Gastrocnemius medialis (tissue), 4 donors: ENCODE measurements at regions of chr9 and their contacts with region 1.

Region 1: GRCh38 chr9:19048966-19049916 is at the start of gene RRAGA:
- DNase-seq: peak; percentile 84 to 89
- ATAC-seq: peak; percentile 94 to 96
- H3K4me3 ChIP-seq: peak within 1 kb of the TSS; percentile 63 to 100 (median 76)
- H3K27ac ChIP-seq: peak within 1 kb of the TSS; percentile 90 to 98 (median 96)
- H3K4me1 ChIP-seq: peaks cover 30 to 42% of the 10 kb centered on the region in 2 donors
- H3K27me3 ChIP-seq: no peaks in the 10 kb centered on the region
- CTCF ChIP-seq: peak; percentile 83 to 96 (median 94)
- POLR2A ChIP-seq: peak; percentile 86 to 87
- total RNA-seq, gene RRAGA: 65.2 to 70.4 (median 65.5) TPM

Region 2: GRCh38 chr9:17810728-17811571 is 1238.3 kb before region 1 on chr9:
- in situ Hi-C with region 1: loop called in 1 of 4 experiments (anchors 25 kb)
- intact Hi-C with region 1: no loop called
- DNase-seq: no peak
- ATAC-seq: no peak
- H3K4me3 ChIP-seq: no peak overlapping the region
- H3K27ac ChIP-seq: no peak overlapping the region
- H3K4me1 ChIP-seq: no peaks in the 10 kb centered on the region
- H3K27me3 ChIP-seq: no peaks in the 10 kb centered on the region
- CTCF ChIP-seq: peak; percentile 22 to 63 (median 41)
- POLR2A ChIP-seq: no peak

Region 3: GRCh38 chr9:18245911-18246310 is 803.3 kb before region 1 on chr9:
- in situ Hi-C with region 1: no loop called
- intact Hi-C with region 1: no loop called
- DNase-seq: no peak
- ATAC-seq: no peak
- H3K4me3 ChIP-seq: no peak overlapping the region
- H3K27ac ChIP-seq: no peak overlapping the region
- H3K4me1 ChIP-seq: no peaks in the 10 kb centered on the region
- H3K27me3 ChIP-seq: no peaks in the 10 kb centered on the region
- CTCF ChIP-seq: no peak
- POLR2A ChIP-seq: no peak

Region 4: GRCh38 chr9:19161257-19162025 is 112.2 kb after region 1 on chr9:
- in situ Hi-C with region 1: no loop called
- intact Hi-C with region 1: loop called (anchors 1 kb)
- DNase-seq: peak; percentile 72 to 77
- ATAC-seq: peak; percentile 93 to 97
- H3K4me3 ChIP-seq: no peak overlapping the region
- H3K27ac ChIP-seq: peak overlapping the region; percentile 72 to 90 (median 88)
- H3K4me1 ChIP-seq: peaks cover 15 to 18% of the 10 kb centered on the region in 2 donors
- H3K27me3 ChIP-seq: no peaks in the 10 kb centered on the region
- CTCF ChIP-seq: no peak
- POLR2A ChIP-seq: no peak

Region 5: DNA sequence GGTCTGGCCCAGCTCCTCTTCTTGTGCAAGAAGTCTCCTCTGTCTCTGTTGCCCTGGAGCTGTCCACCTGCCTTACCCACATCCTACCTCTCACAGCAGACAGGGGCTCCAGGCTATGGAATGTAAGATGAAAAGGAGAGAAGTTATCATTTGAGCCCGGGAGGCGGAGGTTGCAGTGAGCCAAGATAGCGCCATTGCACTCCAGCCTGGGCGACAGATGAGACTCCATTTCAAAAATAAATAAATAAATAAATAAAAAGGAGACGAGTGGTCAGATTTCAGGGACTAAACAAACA is 143.7 kb after region 1 on chr9:
- in situ Hi-C with region 1: no loop called
- intact Hi-C with region 1: no loop called
- DNase-seq: no peak
- ATAC-seq: no peak
- H3K4me3 ChIP-seq: no peak overlapping the region
- H3K27ac ChIP-seq: no peak overlapping the region
- H3K4me1 ChIP-seq: no peaks in the 10 kb centered on the region
- H3K27me3 ChIP-seq: no peaks in the 10 kb centered on the region
- CTCF ChIP-seq: no peak
- POLR2A ChIP-seq: no peak

Region 6: DNA sequence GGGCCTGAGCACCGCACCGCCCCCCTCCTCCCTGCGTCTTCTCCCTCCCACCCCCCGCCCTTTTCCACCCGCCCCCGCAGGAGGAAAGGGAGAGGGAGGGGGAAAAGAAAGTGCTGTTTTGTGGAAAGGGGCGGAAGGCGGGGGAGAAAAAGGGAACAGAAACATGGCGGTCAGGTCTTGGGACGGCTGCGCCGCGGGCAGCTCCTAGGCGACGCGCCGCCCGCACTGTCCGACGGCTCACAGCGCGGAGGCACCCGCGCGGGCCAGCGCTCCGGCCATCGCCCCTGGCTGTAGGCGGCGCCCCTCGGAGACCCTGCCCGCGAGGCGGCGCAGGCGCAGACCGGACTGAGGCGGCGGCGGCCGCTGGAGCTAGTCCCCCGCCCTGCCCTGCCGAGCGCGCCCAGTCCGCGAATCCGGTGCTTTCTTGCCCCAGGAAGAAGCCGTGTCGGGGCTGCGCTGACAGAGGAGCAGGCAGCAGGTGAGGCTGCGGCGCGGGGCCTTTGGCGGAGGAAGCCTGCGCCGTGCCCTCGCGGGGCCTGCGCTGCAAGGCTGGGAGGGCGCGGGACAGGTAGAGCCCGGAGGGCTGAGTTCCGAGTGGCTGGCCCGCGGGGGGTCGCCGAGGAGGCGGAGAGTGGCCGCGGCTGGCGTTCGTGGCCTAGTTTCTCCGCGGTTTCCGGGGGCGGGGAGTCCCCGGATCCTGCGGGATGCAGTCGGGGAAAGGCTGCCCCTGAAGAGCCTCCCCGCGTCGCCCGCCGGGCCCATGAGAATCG is 181.3 kb after region 1 on chr9 and contains the start of gene DENND4C:
- in situ Hi-C with region 1: no loop called
- intact Hi-C with region 1: loop called (anchors 2 kb)
- DNase-seq: peak; percentile 69 to 75
- ATAC-seq: peak; percentile 86 to 91
- H3K4me3 ChIP-seq: peak within 1 kb of the TSS; percentile 88 to 100 (median 94)
- H3K27ac ChIP-seq: peak within 1 kb of the TSS; percentile 94 to 99 (median 96)
- H3K4me1 ChIP-seq: peaks cover 21 to 24% of the 10 kb centered on the region in 2 donors
- H3K27me3 ChIP-seq: no peaks in the 10 kb centered on the region
- CTCF ChIP-seq: peak in 1 of 5 experiments; percentile 17
- POLR2A ChIP-seq: peak; percentile 70 to 80
- total RNA-seq, gene DENND4C: 19.2 to 34.0 (median 21.3) TPM

Region 7: DNA sequence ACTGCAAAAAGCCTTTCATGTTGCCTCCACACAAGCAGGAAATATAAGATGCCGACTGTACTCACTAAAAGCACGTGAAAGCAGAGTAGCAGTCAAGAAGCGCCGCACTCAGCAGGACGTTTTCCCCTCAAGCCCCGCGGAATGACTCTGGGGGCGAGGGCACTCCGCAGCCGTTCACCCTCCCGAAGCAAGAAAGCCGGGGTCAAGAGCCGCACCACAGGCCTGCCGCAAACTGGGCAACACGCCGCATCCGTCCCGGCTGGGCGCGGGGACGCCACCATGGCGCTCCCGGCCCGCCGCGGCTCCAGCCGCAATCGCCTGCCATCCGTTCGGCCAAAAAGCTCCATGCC is 330.4 kb after region 1 on chr9:
- in situ Hi-C with region 1: loop called in 2 of 4 experiments (anchors 25 kb)
- intact Hi-C with region 1: loop called (anchors 2 kb)
- DNase-seq: peak in 1 of 2 donors; percentile 9
- ATAC-seq: peak; percentile 43 to 56
- H3K4me3 ChIP-seq: peak overlapping the region; percentile 79 to 93 (median 90)
- H3K27ac ChIP-seq: peak overlapping the region; percentile 89 to 97 (median 95)
- H3K4me1 ChIP-seq: peaks cover 21 to 27% of the 10 kb centered on the region in 2 donors
- H3K27me3 ChIP-seq: no peaks in the 10 kb centered on the region
- CTCF ChIP-seq: no peak
- POLR2A ChIP-seq: no peak